ENCODE measurements at regions of chr3 and their contacts with region 1.

Region 1: GRCh38 chr3:101561630-101562328 is at the start of gene TRMT10C:
- DNase-seq: peak; percentile 91 to 95 (median 93)
- H3K4me3 ChIP-seq: peak within 1 kb of the TSS; percentile 95 to 100
- H3K4me3 Mint-ChIP-seq: peak within 1 kb of the TSS; percentile 97 to 100 (median 99)
- H3K27ac ChIP-seq: peak within 1 kb of the TSS; percentile 79
- H3K27ac Mint-ChIP-seq: peak within 1 kb of the TSS; percentile 95 to 99 (median 99)
- H3K4me1 ChIP-seq: peaks cover 22% of the 10 kb centered on the region
- H3K4me1 Mint-ChIP-seq: peaks cover 13 to 41% (median 30%) of the 10 kb centered on the region in 4 donors
- H3K27me3 ChIP-seq: no peaks in the 10 kb centered on the region
- H3K27me3 Mint-ChIP-seq: peaks cover 4% of the 10 kb centered on the region in 2 donors
- total RNA-seq, gene TRMT10C: 23.3 to 24.8 TPM

Region 2: DNA sequence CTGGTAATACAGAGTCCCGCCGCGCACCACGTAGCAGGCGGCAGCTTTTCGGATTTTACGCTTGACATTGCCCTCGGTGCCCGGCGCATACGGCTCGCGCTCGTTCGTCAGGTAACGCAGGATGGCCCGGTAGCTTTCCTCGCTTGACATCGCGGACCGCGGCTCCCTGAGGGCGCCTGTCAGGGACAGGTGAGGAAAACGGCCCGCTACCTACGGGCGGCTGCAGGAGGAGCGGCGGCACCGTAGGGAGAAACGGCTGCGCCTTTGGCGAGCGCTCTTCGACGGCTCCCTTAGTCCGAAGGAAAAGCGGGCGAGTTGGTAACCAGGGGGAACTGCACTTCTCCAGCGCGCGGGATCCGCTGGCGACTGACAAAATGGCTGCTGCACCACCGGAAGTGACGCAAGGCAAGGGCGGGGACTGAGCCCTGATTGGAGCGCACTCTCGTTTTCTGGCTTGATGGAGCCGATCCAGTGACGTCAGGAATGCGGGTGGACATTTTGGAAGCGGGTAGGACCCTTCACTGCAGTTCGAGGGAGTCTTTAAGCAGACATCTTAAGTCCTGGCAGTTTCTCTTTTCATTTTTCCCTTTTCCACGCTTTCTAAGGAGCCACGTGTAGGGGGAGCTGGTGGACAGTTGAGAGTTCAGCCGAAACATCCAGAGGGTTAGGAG is 115.1 kb after region 1 on chr3 and contains the start of gene ZBTB11:
- CTCF ChIA-PET with region 1: no interaction called
- POLR2A ChIA-PET with region 1: interaction called, 10 read pairs
- intact Hi-C with region 1: no loop called
- DNase-seq: peak; percentile 99 to 100 (median 99)
- H3K4me3 ChIP-seq: peak within 1 kb of the TSS; percentile 78 to 94
- H3K4me3 Mint-ChIP-seq: peak within 1 kb of the TSS; percentile 92 to 99 (median 96)
- H3K27ac ChIP-seq: peak within 1 kb of the TSS; percentile 98
- H3K27ac Mint-ChIP-seq: peak within 1 kb of the TSS; percentile 97 to 99 (median 98)
- H3K4me1 ChIP-seq: peaks cover 44% of the 10 kb centered on the region
- H3K4me1 Mint-ChIP-seq: peaks cover 23 to 73% (median 41%) of the 10 kb centered on the region in 4 donors
- H3K27me3 ChIP-seq: no peaks in the 10 kb centered on the region
- H3K27me3 Mint-ChIP-seq: peaks cover 0 to 2% of the 10 kb centered on the region in 2 donors
- total RNA-seq, gene ZBTB11: 48.9 to 50.8 TPM

Measured in CD4-positive, alpha-beta memory T cell (primary cell).